Endothelial cell of umbilical vein (primary cell): ENCODE measurements at regions of chr6 and their contacts with region 1.

Region 1: GRCh38 chr6:165439928-165440554 is 130.6 kb upstream of the C6orf118 start:
- DNase-seq: peak; percentile 75
- H3K4me3 ChIP-seq: no peak overlapping the region
- H3K27ac ChIP-seq: no peak overlapping the region
- H3K4me1 ChIP-seq: no peaks in the 10 kb centered on the region
- H3K27me3 ChIP-seq: no peaks in the 10 kb centered on the region
- CTCF ChIP-seq: peak; percentile 35 to 38
- POLR2A ChIP-seq: no peak

Region 2: GRCh38 chr6:164693944-164694343 is 746.1 kb before region 1 on chr6:
- CTCF ChIA-PET with region 1: no interaction called
- POLR2A ChIA-PET with region 1: no interaction called
- dilution Hi-C with region 1: no loop called
- intact Hi-C with region 1: no loop called
- DNase-seq: no peak
- H3K4me3 ChIP-seq: no peak overlapping the region
- H3K27ac ChIP-seq: no peak overlapping the region
- H3K4me1 ChIP-seq: peaks cover 18% of the 10 kb centered on the region
- H3K27me3 ChIP-seq: no peaks in the 10 kb centered on the region
- CTCF ChIP-seq: no peak
- POLR2A ChIP-seq: no peak

Region 3: GRCh38 chr6:165129086-165129485 is 311.0 kb before region 1 on chr6:
- CTCF ChIA-PET with region 1: no interaction called
- POLR2A ChIA-PET with region 1: no interaction called
- dilution Hi-C with region 1: no loop called
- intact Hi-C with region 1: no loop called
- DNase-seq: no peak
- H3K4me3 ChIP-seq: no peak overlapping the region
- H3K27ac ChIP-seq: no peak overlapping the region
- H3K4me1 ChIP-seq: no peaks in the 10 kb centered on the region
- H3K27me3 ChIP-seq: no peaks in the 10 kb centered on the region
- CTCF ChIP-seq: no peak
- POLR2A ChIP-seq: no peak

Region 4: GRCh38 chr6:165266191-165266590 is 173.8 kb before region 1 on chr6:
- CTCF ChIA-PET with region 1: no interaction called
- POLR2A ChIA-PET with region 1: no interaction called
- dilution Hi-C with region 1: no loop called
- intact Hi-C with region 1: no loop called
- DNase-seq: no peak
- H3K4me3 ChIP-seq: no peak overlapping the region
- H3K27ac ChIP-seq: no peak overlapping the region
- H3K4me1 ChIP-seq: no peaks in the 10 kb centered on the region
- H3K27me3 ChIP-seq: no peaks in the 10 kb centered on the region
- CTCF ChIP-seq: no peak
- POLR2A ChIP-seq: no peak

Region 5: GRCh38 chr6:165340532-165340931 is 99.5 kb before region 1 on chr6:
- CTCF ChIA-PET with region 1: no interaction called
- POLR2A ChIA-PET with region 1: no interaction called
- dilution Hi-C with region 1: no loop called
- intact Hi-C with region 1: no loop called
- DNase-seq: no peak
- H3K4me3 ChIP-seq: no peak overlapping the region
- H3K27ac ChIP-seq: no peak overlapping the region
- H3K4me1 ChIP-seq: no peaks in the 10 kb centered on the region
- H3K27me3 ChIP-seq: no peaks in the 10 kb centered on the region
- CTCF ChIP-seq: no peak
- POLR2A ChIP-seq: no peak

Region 6: DNA sequence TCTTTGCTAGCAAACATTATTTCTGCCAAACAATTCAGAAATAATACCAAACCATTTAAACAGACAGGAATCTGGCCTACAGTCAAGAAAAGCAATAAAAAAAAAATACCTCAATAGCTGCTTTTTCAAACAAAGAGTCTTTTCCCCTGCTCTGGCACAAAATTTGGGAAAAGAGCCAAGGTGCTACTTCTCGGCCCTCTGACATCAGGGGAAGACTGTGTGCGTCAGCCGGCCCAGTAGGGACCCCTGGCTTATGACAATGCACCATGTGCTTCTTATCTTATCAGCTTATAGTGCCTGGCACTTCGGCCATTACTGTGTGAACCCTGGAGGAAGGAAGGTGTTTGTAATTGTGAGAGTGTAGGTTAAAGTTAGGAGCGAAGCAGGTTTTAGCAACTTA is 133.6 kb after region 1 on chr6:
- CTCF ChIA-PET with region 1: interaction called, 17 read pairs
- POLR2A ChIA-PET with region 1: no interaction called
- dilution Hi-C with region 1: no loop called
- intact Hi-C with region 1: loop called (anchors 1 kb)
- DNase-seq: peak; percentile 97
- H3K4me3 ChIP-seq: no peak overlapping the region
- H3K27ac ChIP-seq: peak overlapping the region; percentile 69
- H3K4me1 ChIP-seq: peaks cover 19% of the 10 kb centered on the region
- H3K27me3 ChIP-seq: no peaks in the 10 kb centered on the region
- CTCF ChIP-seq: no peak
- POLR2A ChIP-seq: peak; percentile 26

Region 7: DNA sequence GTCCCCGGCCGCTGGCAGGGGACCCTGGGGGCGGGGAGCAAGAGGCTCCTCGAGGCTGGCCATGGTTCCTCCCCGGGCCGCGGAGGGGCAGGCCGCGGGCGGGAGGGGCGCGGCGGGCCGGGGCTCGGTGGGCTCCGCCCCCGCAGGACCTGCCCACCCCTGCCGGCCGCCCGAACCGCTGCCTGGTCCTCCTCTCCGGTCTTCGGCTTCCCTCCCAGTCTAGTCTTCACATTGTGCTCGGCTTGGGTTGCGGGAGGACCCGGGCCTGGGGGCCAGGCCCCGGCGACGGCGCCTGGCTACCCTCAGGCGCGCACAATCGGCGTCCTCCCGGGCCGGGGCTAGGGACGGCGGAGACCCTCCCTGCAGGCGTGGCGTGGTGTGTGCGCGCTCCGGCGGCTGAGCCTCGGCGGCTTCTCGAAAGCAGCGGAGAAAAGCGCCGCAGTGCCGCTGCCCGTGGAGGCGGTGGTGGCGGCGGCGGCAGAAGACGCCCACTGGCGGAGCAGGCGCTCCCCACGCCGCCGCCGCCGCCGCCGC is 222.8 kb after region 1 on chr6 and contains the start of gene PDE10A:
- CTCF ChIA-PET with region 1: interaction called, 34 read pairs
- POLR2A ChIA-PET with region 1: no interaction called
- dilution Hi-C with region 1: no loop called
- intact Hi-C with region 1: loop called (anchors 1 kb)
- DNase-seq: peak; percentile 57
- H3K4me3 ChIP-seq: peak within 1 kb of the TSS; percentile 4 to 59 (median 43)
- H3K27ac ChIP-seq: no peak within 1 kb of the TSS
- H3K4me1 ChIP-seq: peaks cover 13% of the 10 kb centered on the region
- H3K27me3 ChIP-seq: peaks cover 36 to 62% of the 10 kb centered on the region in 2 experiments
- CTCF ChIP-seq: no peak
- POLR2A ChIP-seq: no peak
- total RNA-seq, gene PDE10A: 2.9 and 6.5 TPM in 2 replicates

Region 8: GRCh38 chr6:165717732-165718465 is 277.9 kb after region 1 on chr6:
- CTCF ChIA-PET with region 1: interaction called, 15 read pairs
- POLR2A ChIA-PET with region 1: no interaction called
- dilution Hi-C with region 1: no loop called
- intact Hi-C with region 1: no loop called
- DNase-seq: peak; percentile 53
- H3K4me3 ChIP-seq: no peak overlapping the region
- H3K27ac ChIP-seq: no peak overlapping the region
- H3K4me1 ChIP-seq: peaks cover 5% of the 10 kb centered on the region
- H3K27me3 ChIP-seq: peaks cover 0 to 2% of the 10 kb centered on the region in 2 experiments
- CTCF ChIP-seq: no peak
- POLR2A ChIP-seq: no peak

Region 9: GRCh38 chr6:165744555-165745228 is 304.7 kb after region 1 on chr6:
- CTCF ChIA-PET with region 1: interaction called, 15 read pairs
- POLR2A ChIA-PET with region 1: no interaction called
- dilution Hi-C with region 1: no loop called
- intact Hi-C with region 1: no loop called
- DNase-seq: no peak
- H3K4me3 ChIP-seq: no peak overlapping the region
- H3K27ac ChIP-seq: no peak overlapping the region
- H3K4me1 ChIP-seq: no peaks in the 10 kb centered on the region
- H3K27me3 ChIP-seq: no peaks in the 10 kb centered on the region
- CTCF ChIP-seq: no peak
- POLR2A ChIP-seq: no peak

Region 10: DNA sequence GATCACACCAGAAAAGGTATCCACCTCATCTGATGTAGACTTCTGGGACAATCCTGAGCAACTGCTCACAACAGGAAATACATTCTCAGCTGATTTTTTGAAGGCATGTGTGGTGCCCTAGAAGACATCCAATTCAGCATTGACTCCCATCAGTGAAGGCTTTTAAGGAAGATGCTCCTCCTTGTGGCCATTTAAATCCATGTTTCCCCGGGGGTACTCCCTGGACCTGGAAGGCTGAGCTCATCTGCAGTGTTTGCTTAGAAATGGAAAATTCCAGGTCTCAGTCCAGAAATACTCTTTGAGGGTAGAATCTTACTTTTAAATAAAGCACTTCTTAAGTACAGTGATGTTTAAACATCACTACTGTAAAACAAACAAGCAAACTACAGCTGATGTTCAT is 418.5 kb after region 1 on chr6:
- CTCF ChIA-PET with region 1: interaction called, 164 read pairs
- POLR2A ChIA-PET with region 1: no interaction called
- dilution Hi-C with region 1: no loop called
- intact Hi-C with region 1: no loop called
- DNase-seq: no peak
- H3K4me3 ChIP-seq: no peak overlapping the region
- H3K27ac ChIP-seq: no peak overlapping the region
- H3K4me1 ChIP-seq: no peaks in the 10 kb centered on the region
- H3K27me3 ChIP-seq: peaks cover 5 to 10% of the 10 kb centered on the region in 2 experiments
- CTCF ChIP-seq: peak in 1 of 2 donors; percentile 6
- POLR2A ChIP-seq: no peak